Activated CD8-positive, alpha-beta memory T cell treated with anti-CD3 and anti-CD28 coated beads, Interleukin-2, amount 10 ng/mL, durations not matched to agents 7 days and 5 days (primary cell): ENCODE measurements at regions of chr16 and their contacts with region 1.

Region 1: DNA sequence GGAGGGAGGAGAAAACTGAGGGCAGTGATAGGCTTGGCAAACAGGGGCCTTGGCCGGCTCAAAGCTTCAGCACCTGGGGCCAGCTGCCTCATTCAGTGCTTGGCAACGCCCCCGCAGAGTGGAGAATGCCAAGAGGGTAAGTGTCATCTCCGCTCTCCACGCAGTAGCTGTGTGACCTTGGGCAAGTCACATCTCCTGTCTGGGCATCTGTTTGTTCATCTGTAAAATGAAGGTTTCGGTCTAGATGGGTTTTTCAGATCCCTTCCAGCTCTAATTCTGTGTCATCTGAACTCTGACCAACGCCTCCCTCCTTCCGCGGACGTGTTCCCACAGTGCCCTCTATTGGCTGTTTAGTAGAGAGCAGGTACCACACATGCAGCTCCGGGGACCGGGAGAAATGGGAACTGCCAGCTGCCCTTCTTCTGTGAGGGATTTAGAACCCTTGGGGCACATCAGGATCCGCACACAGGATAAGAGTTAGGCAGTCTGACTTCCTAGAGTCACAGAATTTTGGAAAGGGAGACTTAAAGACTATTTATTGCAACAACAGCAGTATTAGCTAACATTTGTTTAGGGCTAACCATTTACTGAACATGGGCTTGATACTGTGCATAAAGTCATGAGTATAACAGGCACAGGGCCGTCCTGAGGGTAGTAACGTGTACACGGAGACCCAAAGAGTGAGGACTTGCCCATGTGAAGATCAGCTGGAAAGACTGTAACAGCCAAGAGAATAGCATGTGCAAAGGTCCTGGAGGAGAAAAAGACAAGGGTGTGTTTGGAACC is 26.8 kb downstream of the GP2 start:
- DNase-seq: peak; percentile 57
- ATAC-seq: peak; percentile 63
- H3K4me3 Mint-ChIP-seq: no peak overlapping the region
- H3K27ac Mint-ChIP-seq: no peak overlapping the region
- H3K4me1 Mint-ChIP-seq: no peaks in the 10 kb centered on the region
- H3K27me3 Mint-ChIP-seq: no peaks in the 10 kb centered on the region

Region 2: GRCh38 chr16:19898924-19899604 is 401.4 kb before region 1 on chr16:
- CTCF ChIA-PET with region 1: interaction called, 16 read pairs
- DNase-seq: peak; percentile 51
- ATAC-seq: peak; percentile 55
- H3K4me3 Mint-ChIP-seq: no peak overlapping the region
- H3K27ac Mint-ChIP-seq: no peak overlapping the region
- H3K4me1 Mint-ChIP-seq: peaks cover 2% of the 10 kb centered on the region
- H3K27me3 Mint-ChIP-seq: peaks cover 3% of the 10 kb centered on the region

Region 3: DNA sequence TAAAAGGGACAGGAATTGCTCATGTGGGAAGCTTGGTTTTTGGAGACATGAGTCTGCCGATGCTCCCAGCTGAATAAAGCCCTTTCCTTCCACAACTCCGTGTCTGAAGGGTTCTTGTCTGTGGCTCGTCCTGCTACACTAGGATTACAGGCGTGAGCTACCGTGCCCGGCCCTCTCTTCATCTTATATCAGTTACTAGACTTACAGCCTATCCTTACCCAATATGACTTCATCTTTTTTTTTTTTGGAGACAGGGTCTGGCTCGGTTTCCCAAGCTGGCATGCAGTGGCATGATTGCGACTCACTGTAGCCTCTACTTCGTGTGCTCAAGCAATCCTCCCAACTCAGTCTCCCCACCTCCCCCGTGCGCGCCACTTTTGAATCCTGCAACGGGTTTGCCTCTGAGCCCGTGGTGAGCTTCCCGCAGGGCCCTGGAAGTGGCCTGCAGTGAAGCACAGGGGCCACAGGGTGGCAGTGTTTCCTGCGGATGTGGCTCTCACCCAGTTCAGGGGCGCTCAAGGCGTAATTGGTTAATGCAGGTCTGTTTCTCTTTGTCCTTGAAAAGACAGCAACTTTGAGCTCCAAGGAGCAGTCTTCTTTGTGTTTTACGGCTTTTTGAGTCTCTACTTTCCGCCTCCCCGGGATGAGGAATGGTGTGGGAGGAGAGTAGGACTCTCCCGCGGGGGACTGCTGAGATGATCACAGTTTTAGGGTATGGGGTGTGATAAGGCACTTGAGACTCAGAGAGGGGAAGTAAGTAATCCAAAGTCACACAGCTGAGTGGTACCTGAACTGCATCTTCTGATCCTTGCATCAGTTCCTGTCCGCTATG is 393.1 kb before region 1 on chr16:
- CTCF ChIA-PET with region 1: interaction called, 65 read pairs
- DNase-seq: peak; percentile 77
- ATAC-seq: peak; percentile 91
- H3K4me3 Mint-ChIP-seq: no peak overlapping the region
- H3K27ac Mint-ChIP-seq: no peak overlapping the region
- H3K4me1 Mint-ChIP-seq: peaks cover 2% of the 10 kb centered on the region
- H3K27me3 Mint-ChIP-seq: peaks cover 13% of the 10 kb centered on the region